ENCODE measurements at regions of chr17 and their contacts with region 1.

Region 1: GRCh38 chr17:11690681-11691080 is 92.4 kb downstream of the DNAH9 start:
- DNase-seq: no peak
- H3K4me3 ChIP-seq: no peak overlapping the region
- CTCF ChIP-seq: no peak
- POLR2A ChIP-seq: no peak

Region 2: GRCh38 chr17:11638700-11639265 is 51.9 kb before region 1 on chr17:
- intact Hi-C with region 1: loop called (anchors 10 kb)
- DNase-seq: peak in 1 of 2 donors; percentile 31
- H3K4me3 ChIP-seq: no peak overlapping the region
- CTCF ChIP-seq: no peak
- POLR2A ChIP-seq: no peak

Measured in lower leg skin (tissue), 4 donors.